Heart left ventricle (tissue), 16 donors: ENCODE measurements at regions of chr17 and their contacts with region 1.

Region 1: GRCh38 chr17:57927048-57927723 is 28.0 kb downstream of the CUEDC1 start:
- DNase-seq: peak in 2 of 5 donors; percentile 56 to 71
- ATAC-seq: peak; percentile 38 to 80 (median 73)
- H3K4me3 ChIP-seq: peak overlapping the region in 1 of 12 donors; percentile 4
- H3K27ac ChIP-seq: peak overlapping the region in 11 of 12 donors; percentile 6 to 84 (median 50)
- H3K4me1 ChIP-seq: peaks cover 26 to 91% (median 72%) of the 10 kb centered on the region in 12 donors
- H3K27me3 ChIP-seq: no peaks in the 10 kb centered on the region
- CTCF ChIP-seq: no peak
- POLR2A ChIP-seq: no peak

Region 2: GRCh38 chr17:57911834-57912673 is 15.1 kb before region 1 on chr17:
- intact Hi-C with region 1: loop called in 2 of 10 experiments (anchors 2 kb)
- DNase-seq: peak; percentile 93 to 98 (median 94)
- ATAC-seq: peak; percentile 92 to 96 (median 94)
- H3K4me3 ChIP-seq: peak overlapping the region in 4 of 12 donors; percentile 13 to 21 (median 18)
- H3K27ac ChIP-seq: peak overlapping the region in 11 of 12 donors; percentile 15 to 84 (median 78)
- H3K4me1 ChIP-seq: peaks cover 7 to 73% (median 57%) of the 10 kb centered on the region in 12 donors
- H3K27me3 ChIP-seq: no peaks in the 10 kb centered on the region
- CTCF ChIP-seq: no peak
- POLR2A ChIP-seq: peak in 1 of 2 donors; percentile 12